WTC11 (cell line): ENCODE measurements at regions of chr6 and their contacts with region 1.

Region 1: DNA sequence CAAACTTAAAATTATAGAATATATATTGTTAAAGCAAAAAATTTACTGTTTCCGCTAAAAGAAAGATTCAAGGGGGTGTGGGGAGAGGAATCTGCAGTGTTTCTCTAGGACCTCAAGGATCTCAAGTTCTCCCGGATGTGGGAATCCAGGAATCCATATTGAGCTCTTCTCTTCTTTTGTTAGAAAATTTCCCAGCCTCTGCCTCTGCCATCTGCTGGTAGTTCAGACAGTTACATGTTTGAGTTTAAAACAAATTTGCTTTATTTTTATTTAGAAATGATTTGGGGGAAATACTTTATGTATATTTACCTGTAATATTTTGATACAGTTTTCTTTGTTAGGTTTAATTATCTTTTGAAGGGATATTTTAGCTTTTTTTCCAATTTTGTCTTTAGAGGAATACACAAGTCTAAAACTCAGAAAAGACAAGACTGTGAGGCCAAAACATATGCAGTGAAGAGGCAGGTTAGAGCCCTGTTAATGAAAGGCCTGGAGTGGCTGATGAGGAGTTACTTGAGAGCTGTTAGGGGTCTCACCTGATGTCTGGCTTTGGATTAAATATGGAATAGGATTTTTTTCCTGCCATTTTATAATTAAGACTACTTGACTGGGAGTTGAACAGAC is 268.8 kb downstream of the ARID1B start:
- DNase-seq: no peak
- ATAC-seq: peak; percentile 67
- H3K4me3 Mint-ChIP-seq: no peak overlapping the region
- H3K27ac Mint-ChIP-seq: no peak overlapping the region
- H3K4me1 Mint-ChIP-seq: peaks cover 44% of the 10 kb centered on the region
- H3K27me3 Mint-ChIP-seq: no peaks in the 10 kb centered on the region
- CTCF ChIP-seq: no peak

Region 2: DNA sequence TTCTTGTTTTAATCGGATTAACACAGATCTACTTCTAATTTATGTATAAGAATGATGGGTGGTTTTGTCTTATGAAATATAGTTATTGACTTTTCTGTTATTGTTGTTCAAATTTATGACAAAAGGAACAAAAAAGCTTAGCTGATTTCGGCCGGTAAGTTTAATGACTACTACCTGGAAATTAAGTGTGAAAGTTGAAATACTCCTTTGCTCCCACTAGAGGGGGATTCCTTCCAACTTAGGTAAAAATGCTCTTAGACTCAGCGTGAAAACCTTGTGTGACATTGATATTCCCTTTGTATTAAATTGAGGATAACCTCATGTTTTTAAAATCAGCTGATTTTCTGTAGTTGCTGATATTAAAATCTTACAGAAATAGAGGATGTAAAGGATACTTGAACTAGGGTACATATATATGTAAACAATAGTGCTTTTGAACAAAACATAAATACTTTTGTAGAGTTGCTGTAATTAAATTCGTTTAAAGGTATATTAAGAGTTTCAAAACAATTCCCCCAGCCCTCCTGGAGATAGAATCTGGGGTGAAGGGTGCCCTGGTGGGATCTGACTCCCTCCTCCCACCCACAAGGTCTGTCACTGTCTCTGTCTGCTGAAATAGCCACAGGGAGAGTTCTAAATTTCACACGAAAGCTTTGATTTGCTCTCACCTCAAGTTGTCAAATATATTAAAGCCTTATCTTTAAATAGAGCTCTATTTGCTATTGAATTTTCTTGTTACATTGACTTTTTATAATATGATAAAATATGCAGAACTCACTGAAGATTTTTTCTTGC is 11.3 kb before region 1 on chr6:
- CTCF ChIA-PET with region 1: interaction called, 36 read pairs
- POLR2A ChIA-PET with region 1: interaction called, 3 read pairs
- DNase-seq: no peak
- ATAC-seq: no peak
- H3K4me3 Mint-ChIP-seq: no peak overlapping the region
- H3K27ac Mint-ChIP-seq: peak overlapping the region; percentile 27; the same call in 1 of the 2 replicates
- H3K4me1 Mint-ChIP-seq: peaks cover 30% of the 10 kb centered on the region
- H3K27me3 Mint-ChIP-seq: no peaks in the 10 kb centered on the region
- CTCF ChIP-seq: peak; percentile 49

Region 3: GRCh38 chr6:157059781-157060180 is 13.8 kb after region 1 on chr6:
- CTCF ChIA-PET with region 1: interaction called, 21 read pairs
- POLR2A ChIA-PET with region 1: interaction called, 3 read pairs
- DNase-seq: no peak
- ATAC-seq: no peak
- H3K4me3 Mint-ChIP-seq: no peak overlapping the region
- H3K27ac Mint-ChIP-seq: peak overlapping the region; percentile 61; the same call in 1 of the 2 replicates
- H3K4me1 Mint-ChIP-seq: peaks cover 39% of the 10 kb centered on the region
- H3K27me3 Mint-ChIP-seq: no peaks in the 10 kb centered on the region
- CTCF ChIP-seq: no peak

Region 4: GRCh38 chr6:157089258-157089657 is 43.3 kb after region 1 on chr6:
- CTCF ChIA-PET with region 1: interaction called, 16 read pairs
- POLR2A ChIA-PET with region 1: interaction called, 3 read pairs
- DNase-seq: peak; percentile 70
- ATAC-seq: peak; percentile 83
- H3K4me3 Mint-ChIP-seq: 0 out of 2 replicates have a peak overlapping the region, but pooled peaks have one; percentile 22
- H3K27ac Mint-ChIP-seq: peak overlapping the region; percentile 92
- H3K4me1 Mint-ChIP-seq: peaks cover 54% of the 10 kb centered on the region
- H3K27me3 Mint-ChIP-seq: no peaks in the 10 kb centered on the region
- CTCF ChIP-seq: no peak